GM12878 (cell line): ENCODE measurements at regions of chr12 and their contacts with region 1.

Region 1: GRCh38 chr12:26791301-26791791 is 41.6 kb downstream of the ITPR2 start:
- DNase-seq: peak; percentile 54
- ATAC-seq: peak; percentile 88
- H3K4me3 ChIP-seq: no peak overlapping the region
- H3K27ac ChIP-seq: peak overlapping the region; percentile 56
- H3K4me1 ChIP-seq: peaks cover 17% of the 10 kb centered on the region
- H3K27me3 ChIP-seq: no peaks in the 10 kb centered on the region
- CTCF ChIP-seq: no peak
- EP300 ChIP-seq: peak in 1 of 2 experiments; percentile 46; a peak in 1 of 4 replicates
- POLR2A ChIP-seq: no peak
- RAD21 ChIP-seq: no peak

Region 2: DNA sequence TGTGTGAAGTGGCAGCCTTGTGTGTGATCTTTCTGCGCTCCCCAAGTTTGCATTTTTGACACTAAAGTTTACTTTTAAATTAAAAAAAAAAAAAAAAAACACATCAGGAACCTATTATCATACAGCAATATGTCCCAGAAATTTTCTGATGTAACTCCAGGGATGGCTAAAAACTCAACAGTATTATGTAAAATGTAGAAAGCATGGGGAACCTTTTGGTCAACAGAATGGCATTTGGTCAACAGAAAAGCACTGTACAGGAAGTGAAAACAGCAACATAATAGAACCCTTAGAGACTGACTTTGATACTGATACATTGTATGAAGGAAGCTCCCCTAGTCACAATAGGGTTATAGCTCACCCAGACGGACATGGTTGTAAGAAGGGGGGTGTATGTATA is 182.6 kb before region 1 on chr12:
- CTCF ChIA-PET with region 1: no interaction called
- POLR2A ChIA-PET with region 1: no interaction called
- RAD21 ChIA-PET with region 1: no interaction called
- SMC1A ChIA-PET with region 1: no interaction called
- in situ Hi-C with region 1: no loop called
- intact Hi-C with region 1: no loop called
- DNase-seq: no peak
- ATAC-seq: peak; percentile 34; the same call in 1 of the 3 replicates
- H3K4me3 ChIP-seq: no peak overlapping the region
- H3K27ac ChIP-seq: no peak overlapping the region
- H3K4me1 ChIP-seq: no peaks in the 10 kb centered on the region
- H3K27me3 ChIP-seq: no peaks in the 10 kb centered on the region
- CTCF ChIP-seq: no peak
- EP300 ChIP-seq: no peak
- POLR2A ChIP-seq: no peak
- RAD21 ChIP-seq: no peak

Region 3: GRCh38 chr12:26648584-26648983 is 142.8 kb before region 1 on chr12:
- CTCF ChIA-PET with region 1: no interaction called
- POLR2A ChIA-PET with region 1: no interaction called
- RAD21 ChIA-PET with region 1: no interaction called
- SMC1A ChIA-PET with region 1: no interaction called
- in situ Hi-C with region 1: no loop called
- intact Hi-C with region 1: no loop called
- DNase-seq: no peak
- ATAC-seq: no peak
- H3K4me3 ChIP-seq: no peak overlapping the region
- H3K27ac ChIP-seq: no peak overlapping the region
- H3K4me1 ChIP-seq: no peaks in the 10 kb centered on the region
- H3K27me3 ChIP-seq: no peaks in the 10 kb centered on the region
- CTCF ChIP-seq: no peak
- EP300 ChIP-seq: no peak
- POLR2A ChIP-seq: no peak
- RAD21 ChIP-seq: no peak

Region 4: GRCh38 chr12:26768611-26769603 is 22.4 kb before region 1 on chr12:
- CTCF ChIA-PET with region 1: interaction called, 3 read pairs
- POLR2A ChIA-PET with region 1: interaction called, 18 read pairs
- RAD21 ChIA-PET with region 1: no interaction called
- SMC1A ChIA-PET with region 1: interaction called, 26 read pairs
- in situ Hi-C with region 1: no loop called
- intact Hi-C with region 1: no loop called
- DNase-seq: no peak
- ATAC-seq: peak; percentile 75
- H3K4me3 ChIP-seq: no peak overlapping the region
- H3K27ac ChIP-seq: peak overlapping the region; percentile 67
- H3K4me1 ChIP-seq: peaks cover 32% of the 10 kb centered on the region
- H3K27me3 ChIP-seq: no peaks in the 10 kb centered on the region
- CTCF ChIP-seq: no peak
- EP300 ChIP-seq: no peak
- POLR2A ChIP-seq: no peak
- RAD21 ChIP-seq: no peak

Region 5: DNA sequence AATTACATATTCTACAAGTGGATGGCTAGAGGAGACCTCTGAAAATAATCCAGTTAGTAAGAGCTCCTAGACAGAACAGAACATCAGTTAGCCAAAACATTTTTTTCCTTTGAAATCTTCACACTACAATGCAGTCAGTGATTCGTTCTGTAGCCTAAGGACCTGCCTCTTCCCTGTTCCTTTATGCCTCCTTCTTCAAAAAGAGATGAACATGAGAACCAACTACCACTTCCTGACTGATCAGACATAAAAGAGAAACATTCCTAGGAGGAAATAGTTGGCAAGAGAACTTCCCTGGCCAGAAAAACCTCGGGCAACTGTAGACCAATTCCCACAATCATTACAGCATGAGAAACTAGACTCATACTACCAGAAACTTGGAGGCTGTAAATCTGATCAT is 12.2 kb after region 1 on chr12:
- CTCF ChIA-PET with region 1: no interaction called
- POLR2A ChIA-PET with region 1: interaction called, 3 read pairs
- RAD21 ChIA-PET with region 1: interaction called, 5 read pairs
- SMC1A ChIA-PET with region 1: interaction called, 11 read pairs
- in situ Hi-C with region 1: no loop called
- intact Hi-C with region 1: no loop called
- DNase-seq: no peak
- ATAC-seq: no peak
- H3K4me3 ChIP-seq: no peak overlapping the region
- H3K27ac ChIP-seq: no peak overlapping the region
- H3K4me1 ChIP-seq: peaks cover 22% of the 10 kb centered on the region
- H3K27me3 ChIP-seq: no peaks in the 10 kb centered on the region
- CTCF ChIP-seq: no peak
- EP300 ChIP-seq: no peak
- POLR2A ChIP-seq: no peak
- RAD21 ChIP-seq: no peak